Activated T-helper 2 cell treated with anti-CD3 and anti-CD28 coated beads, Interferon-gamma antibody, Interleukin-2, Interleukin-4, amounts not matched to agents 10 μg/mL and 5 μg/mL and 100 μg/mL, durations not matched to agents 14 hours and 24 hours and 36 hours (primary cell): ENCODE measurements at regions of chr12 and their contacts with region 1.

Region 1: DNA sequence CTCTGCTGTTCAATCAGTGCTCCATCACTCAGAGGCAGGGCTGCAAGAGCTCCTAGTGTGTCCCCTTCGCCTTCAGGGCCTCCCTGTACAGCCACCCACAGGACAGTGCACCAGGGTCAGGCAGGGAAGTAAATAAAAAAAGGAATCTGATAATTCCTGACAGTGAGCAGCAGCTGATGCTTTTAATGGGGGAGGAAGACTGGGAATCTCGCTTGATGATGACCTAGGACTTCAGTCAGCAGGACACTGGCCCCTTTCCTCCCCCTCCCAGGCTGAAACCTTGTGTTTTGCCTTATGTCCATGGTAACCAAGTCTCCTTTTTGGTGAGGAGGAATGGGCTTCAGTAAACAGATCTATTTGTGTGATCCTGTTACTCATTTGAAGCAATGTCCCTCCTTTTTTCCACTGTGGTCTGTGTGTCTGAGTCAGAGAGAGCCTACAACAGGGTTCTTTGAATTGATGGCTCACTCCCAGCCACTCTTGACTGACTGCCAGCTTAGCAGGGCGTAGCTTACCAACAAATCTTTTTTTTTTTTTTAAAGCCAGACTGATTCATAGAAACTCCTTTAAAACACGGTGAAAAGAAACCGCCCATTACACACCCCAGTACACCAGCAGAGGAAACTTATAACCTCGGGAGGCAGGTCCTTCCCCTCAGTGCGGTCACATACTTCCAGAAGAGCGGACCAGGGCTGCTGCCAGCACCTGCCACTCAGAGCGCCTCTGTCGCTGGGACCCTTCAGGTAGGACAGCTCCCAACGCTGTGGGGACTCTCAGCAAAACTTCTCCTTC is at the start of gene EMP1:
- DNase-seq: peak; percentile 65
- H3K4me3 Mint-ChIP-seq: peak within 1 kb of the TSS; percentile 78
- H3K27ac Mint-ChIP-seq: peak within 1 kb of the TSS; percentile 79
- H3K4me1 Mint-ChIP-seq: peaks cover 24% of the 10 kb centered on the region
- H3K27me3 Mint-ChIP-seq: peaks cover 25% of the 10 kb centered on the region
- total RNA-seq, gene EMP1: 9.5 and 10.2 TPM in 2 replicates

Region 2: DNA sequence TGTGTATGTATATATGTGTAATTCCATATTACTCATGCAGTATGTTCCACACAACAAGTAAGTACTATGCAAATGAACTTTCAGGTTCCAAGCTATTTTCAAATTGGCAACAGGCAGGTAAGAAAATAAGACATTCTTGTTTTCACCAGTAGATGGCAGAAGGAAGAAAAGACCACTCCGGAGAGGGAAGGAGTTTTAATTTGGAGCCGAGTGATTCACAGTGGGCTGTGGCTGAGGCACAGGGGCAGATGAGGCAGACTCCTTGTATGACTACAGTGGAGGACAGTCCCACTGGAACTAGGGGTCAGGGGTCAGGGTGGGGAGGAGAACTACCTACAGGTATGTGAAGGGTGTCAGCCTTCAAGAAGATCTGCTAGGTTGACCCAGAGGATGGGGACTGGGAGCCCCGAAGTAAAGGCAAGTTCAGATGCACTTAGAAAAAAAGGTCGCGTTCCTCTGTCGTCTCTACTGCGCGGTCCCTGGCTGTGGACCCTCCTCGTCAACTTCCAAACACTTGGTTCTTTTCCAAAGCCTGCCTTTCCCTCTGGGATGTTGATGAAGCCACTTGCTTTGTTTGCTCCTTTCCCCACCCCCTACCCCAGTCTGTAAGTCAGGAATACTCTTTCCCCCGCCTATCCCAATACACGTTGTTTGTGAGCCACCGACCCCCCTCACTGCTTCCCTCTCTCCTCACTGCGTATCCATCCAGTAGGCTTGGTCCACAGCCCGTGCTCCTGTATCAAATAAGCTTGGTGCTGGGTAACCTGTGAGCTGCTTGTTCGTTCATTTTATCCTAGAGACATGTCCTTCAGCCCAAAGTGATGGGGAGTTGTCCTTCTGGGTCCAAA is 359.1 kb before region 1 on chr12:
- intact Hi-C with region 1: loop called (anchors 10 kb)
- DNase-seq: no peak
- H3K4me3 Mint-ChIP-seq: no peak overlapping the region
- H3K27ac Mint-ChIP-seq: peak overlapping the region; percentile 60
- H3K4me1 Mint-ChIP-seq: peaks cover 17% of the 10 kb centered on the region
- H3K27me3 Mint-ChIP-seq: no peaks in the 10 kb centered on the region

Region 3: GRCh38 chr12:13100882-13101769 is 95.2 kb before region 1 on chr12:
- intact Hi-C with region 1: loop called (anchors 1 kb)
- DNase-seq: peak; percentile 89
- H3K4me3 Mint-ChIP-seq: peak overlapping the region; percentile 71
- H3K27ac Mint-ChIP-seq: peak overlapping the region; percentile 75
- H3K4me1 Mint-ChIP-seq: peaks cover 47% of the 10 kb centered on the region
- H3K27me3 Mint-ChIP-seq: peaks cover 5% of the 10 kb centered on the region

Region 4: GRCh38 chr12:13165617-13166041 is 30.7 kb before region 1 on chr12:
- intact Hi-C with region 1: loop called (anchors 2 kb)
- DNase-seq: peak; percentile 49
- H3K4me3 Mint-ChIP-seq: no peak overlapping the region
- H3K27ac Mint-ChIP-seq: no peak overlapping the region
- H3K4me1 Mint-ChIP-seq: peaks cover 21% of the 10 kb centered on the region
- H3K27me3 Mint-ChIP-seq: peaks cover 19% of the 10 kb centered on the region

Region 5: DNA sequence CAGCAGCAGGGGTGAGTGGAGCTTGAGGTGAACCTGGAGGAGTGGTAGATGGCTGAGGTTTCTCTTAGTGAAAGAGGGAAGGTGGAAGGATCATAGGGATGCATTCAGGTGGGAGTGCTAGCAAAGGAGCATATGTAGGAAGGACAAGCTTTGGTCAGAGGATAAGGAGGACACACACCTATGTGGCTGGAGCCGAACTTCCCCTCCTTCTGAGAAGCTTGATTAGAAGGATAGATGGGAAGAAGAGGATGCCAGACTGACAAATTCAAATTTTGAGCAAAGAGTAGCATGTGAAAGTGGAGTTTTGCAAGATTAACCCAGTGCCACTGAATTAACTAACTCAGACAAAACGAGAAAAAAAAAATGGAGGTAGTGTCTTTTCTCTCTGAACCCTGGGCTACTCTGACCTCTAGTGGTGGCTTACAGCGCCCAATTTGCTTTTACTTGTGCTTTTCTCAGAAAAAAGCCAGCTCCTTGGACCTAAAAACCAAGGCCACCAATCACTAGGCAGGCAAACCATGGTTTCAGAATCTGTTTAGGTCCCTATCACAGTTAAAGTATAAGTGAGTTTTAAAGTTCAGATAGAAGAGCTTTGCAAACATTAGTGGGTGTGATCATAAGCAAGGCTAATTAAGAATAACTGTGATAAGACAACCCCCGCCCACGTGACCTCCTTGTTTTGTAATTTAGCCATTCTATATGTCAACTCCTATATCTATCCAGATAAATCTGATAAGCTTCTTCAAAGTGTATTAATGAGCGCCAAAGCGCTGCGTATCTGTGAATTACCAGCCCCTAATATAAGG is 15.7 kb after region 1 on chr12:
- intact Hi-C with region 1: loop called (anchors 1 kb)
- DNase-seq: peak; percentile 58
- H3K4me3 Mint-ChIP-seq: no peak overlapping the region
- H3K27ac Mint-ChIP-seq: no peak overlapping the region
- H3K4me1 Mint-ChIP-seq: peaks cover 26% of the 10 kb centered on the region
- H3K27me3 Mint-ChIP-seq: peaks cover 1% of the 10 kb centered on the region